ENCODE measurements at regions of chr10 and their contacts with region 1.

Region 1: DNA sequence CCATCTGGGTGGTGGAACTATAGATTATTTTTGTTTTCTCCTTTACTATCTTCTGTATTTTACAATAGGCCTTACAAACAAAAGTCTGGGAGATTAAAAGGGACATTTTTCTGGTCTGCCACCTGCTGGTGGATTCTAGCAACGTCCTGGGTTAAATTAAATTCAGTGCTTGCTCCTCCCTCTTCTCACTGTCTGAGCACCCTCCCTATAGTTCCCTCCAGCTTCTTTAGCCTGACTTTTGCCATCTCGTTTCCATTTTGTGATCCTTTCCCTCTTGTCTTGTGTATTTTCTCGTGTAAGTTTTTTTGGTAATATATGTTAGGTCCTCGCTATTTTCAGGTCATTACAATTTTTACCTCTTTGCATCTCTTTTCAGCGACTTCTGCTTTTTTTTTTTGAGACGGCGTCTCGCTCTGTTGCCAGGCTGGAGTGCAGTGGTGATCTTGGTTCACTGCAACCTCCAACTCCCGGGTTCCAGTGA is 16.1 kb downstream of the ANKRD16 start:
- DNase-seq: no peak
- H3K4me3 ChIP-seq: no peak overlapping the region
- CTCF ChIP-seq: peak; percentile 50

Region 2: DNA sequence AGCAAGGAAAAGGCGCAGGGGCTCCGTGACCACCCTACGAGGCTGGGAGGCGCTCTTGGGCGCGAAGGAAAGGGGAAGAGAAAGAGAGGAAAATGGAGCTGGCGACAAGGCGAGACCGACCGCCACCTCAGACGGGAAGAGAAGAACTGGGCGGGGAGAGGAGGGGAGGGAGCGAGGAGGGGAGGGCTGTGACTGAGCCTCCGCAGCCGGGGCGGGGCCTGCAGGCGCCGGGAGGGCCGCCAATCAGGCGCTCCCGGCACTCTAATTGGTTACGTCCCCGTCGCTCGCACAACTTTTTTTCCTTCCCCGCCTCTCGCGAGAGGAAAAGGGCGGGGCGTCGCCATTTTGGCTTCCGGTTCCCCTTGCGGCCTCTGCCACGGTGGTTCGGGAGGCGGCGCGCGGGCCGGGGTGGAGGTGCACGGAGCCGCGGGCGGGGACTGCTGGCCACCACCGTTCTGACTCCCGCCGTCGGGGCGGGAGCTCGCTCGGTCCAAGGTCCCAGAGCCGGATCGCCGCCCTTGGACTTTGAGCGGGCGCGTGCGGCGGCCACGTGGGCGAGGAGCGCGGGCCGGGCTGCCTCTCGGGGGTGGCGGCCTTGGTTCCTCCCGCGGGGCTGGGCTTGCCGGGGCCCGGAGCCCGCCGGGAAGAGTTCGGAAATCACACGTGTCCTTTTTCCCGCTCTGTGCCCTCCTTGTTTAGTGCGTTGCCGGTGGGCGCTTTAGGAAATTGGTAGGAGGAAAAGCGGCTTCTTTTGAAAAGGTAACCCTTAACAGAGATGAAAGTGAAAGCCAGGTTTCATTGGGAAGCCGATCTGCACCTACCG is 60.1 kb before region 1 on chr10 and contains the start of gene GDI2:
- CTCF ChIA-PET with region 1: interaction called, 21 read pairs
- POLR2A ChIA-PET with region 1: interaction called, 3 read pairs
- DNase-seq: peak; percentile 70
- H3K4me3 ChIP-seq: peak within 1 kb of the TSS; percentile 94
- CTCF ChIP-seq: no peak

Region 3: DNA sequence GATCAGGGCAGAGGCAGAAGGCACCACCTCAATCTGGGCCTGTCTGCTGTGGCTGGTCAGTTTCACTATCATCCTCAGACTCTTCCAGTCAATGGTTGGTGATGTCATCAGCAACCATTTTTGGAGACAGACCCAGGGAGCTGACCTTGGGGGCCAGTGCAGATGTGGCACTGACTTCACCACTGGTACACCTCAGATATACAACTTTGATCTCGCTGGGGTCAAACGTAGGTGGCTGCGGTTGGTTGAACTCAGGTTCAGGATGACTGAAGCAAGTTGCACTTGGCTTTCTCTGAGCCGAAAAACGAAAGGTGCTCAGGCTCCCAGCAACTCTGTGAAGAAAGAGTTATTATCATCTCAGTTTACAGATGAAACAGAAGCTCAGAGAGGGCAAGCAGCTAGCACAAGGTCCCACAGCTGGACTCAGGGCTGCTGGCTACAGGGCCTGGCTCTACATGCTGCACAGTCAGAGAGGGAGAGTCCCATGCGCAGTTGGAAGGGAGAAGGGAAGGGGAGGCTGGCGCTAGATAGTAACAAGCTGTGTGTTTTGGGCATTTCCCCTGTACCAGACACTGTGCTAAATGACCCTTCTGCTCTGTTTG is 11.1 kb before region 1 on chr10:
- CTCF ChIA-PET with region 1: interaction called, 24 read pairs
- POLR2A ChIA-PET with region 1: no interaction called
- DNase-seq: no peak
- H3K4me3 ChIP-seq: no peak overlapping the region
- CTCF ChIP-seq: no peak

Region 4: GRCh38 chr10:5888843-5889623 is 15.5 kb after region 1 on chr10:
- CTCF ChIA-PET with region 1: interaction called, 12 read pairs
- POLR2A ChIA-PET with region 1: interaction called, 4 read pairs
- DNase-seq: no peak
- H3K4me3 ChIP-seq: peak overlapping the region; percentile 79
- CTCF ChIP-seq: no peak

Region 5: GRCh38 chr10:5977471-5978229 is 104.1 kb after region 1 on chr10 and contains the start of gene IL15RA:
- CTCF ChIA-PET with region 1: no interaction called
- POLR2A ChIA-PET with region 1: no interaction called
- DNase-seq: no peak
- H3K4me3 ChIP-seq: peak within 1 kb of the TSS; percentile 72
- CTCF ChIP-seq: no peak